Mammary epithelial cell (primary cell): ENCODE measurements at regions of chr1 and their contacts with region 1.

Region 1: DNA sequence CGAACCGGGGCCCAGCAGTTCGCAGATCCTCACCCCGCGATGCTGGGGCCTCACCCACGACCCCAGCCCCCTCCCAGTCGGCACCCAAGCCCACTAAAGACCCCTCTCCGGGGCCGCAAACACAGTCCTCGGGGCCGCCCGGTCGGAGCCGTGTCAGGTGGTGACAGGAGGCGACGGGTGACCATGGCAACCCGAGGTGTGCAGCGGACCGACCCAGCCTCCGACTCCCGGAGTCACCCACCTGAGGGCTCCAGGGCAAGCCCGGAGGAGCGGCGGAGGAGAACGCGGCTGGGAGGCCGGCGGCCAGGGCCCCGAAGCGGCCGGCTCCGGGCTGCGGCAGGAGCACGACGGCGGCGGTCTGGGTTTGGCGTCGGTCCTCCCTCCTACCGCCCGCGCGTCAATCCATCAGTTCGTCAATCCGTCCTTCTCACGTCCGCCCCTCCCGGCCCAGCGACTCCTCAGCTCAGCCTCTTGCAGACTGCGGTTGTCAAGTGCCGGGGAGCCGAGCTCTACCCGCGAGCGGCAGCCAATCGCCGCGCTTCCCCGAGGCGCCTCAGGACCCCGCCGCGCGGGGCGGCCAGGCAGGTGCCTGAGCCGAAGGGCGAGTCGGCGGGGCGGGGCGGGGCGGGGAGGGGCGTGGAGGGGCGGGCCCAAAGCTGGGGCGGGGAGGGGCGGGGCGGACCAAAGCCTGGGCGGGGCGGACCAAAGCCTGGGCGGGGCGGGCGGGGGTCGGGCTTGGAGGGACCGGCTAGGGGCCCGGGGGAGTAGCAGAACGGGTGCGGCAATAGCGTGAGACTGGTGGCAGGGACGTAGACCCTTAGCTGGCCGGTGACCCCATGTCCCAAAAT is at the start of gene WDR47:
- DNase-seq: peak; percentile 96
- H3K4me3 ChIP-seq: peak within 1 kb of the TSS; percentile 91 to 99 (median 96)
- H3K27ac ChIP-seq: peak within 1 kb of the TSS; percentile 74
- H3K4me1 ChIP-seq: no peaks in the 10 kb centered on the region
- H3K27me3 ChIP-seq: no peaks in the 10 kb centered on the region
- CTCF ChIP-seq: no peak
- total RNA-seq, gene WDR47: 24.3 to 45.5 TPM

Region 2: DNA sequence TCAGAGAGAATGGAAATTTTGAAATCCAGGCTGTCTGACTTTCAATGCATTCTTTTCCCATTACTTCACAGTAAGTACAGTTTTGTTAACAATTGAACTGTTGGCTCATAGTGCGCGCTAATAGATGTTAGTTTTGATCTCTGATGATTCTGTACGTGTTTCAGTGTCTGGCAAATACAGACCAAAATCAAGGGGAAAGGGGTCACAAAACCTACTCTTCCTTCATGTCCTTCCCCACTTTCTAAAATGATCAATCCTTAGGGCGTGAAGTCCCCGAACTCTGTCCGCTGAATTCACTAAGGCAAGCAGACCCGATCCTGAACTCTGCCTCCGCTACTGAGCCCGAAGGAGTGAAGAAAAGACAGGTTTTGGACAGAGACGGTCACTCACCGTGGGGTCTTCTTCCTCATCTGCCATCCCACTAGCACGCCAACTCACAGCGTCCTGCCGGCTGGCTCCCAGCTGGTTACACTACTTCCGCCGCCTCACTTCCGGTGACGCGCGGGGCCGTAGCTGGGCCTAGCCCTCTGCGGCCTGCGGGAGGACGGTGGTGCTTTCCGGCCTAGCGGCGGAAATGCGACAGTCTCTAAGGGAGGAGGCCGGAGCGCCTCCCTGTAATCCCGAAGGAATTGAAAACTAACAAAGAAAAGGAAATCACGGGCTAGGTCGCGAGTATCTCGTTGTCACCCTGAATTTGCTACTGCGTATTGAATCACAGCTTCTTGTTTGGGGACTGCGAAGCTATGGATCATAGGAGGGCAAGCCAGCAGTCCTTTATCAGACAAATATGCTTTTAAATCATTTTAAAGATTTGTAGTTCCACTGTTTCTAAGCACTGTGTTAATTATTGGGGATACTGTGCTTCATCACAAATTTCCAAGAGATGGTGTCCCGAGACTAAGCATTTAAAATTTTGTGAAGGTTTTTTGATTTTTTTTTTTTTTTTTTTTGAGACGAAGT is 34.0 kb after region 1 on chr1 and contains the start of gene TAF13:
- CTCF ChIA-PET with region 1: no interaction called
- dilution Hi-C with region 1: no loop called
- in situ Hi-C with region 1: no loop called
- intact Hi-C with region 1: loop called (anchors 5 kb)
- DNase-seq: peak; percentile 93
- H3K4me3 ChIP-seq: peak within 1 kb of the TSS; percentile 88 to 94 (median 92)
- H3K27ac ChIP-seq: peak within 1 kb of the TSS; percentile 90
- H3K4me1 ChIP-seq: peaks cover 8% of the 10 kb centered on the region
- H3K27me3 ChIP-seq: no peaks in the 10 kb centered on the region
- CTCF ChIP-seq: peak in 1 of 2 donors; percentile 34
- total RNA-seq, gene TAF13: 67.8 to 80.4 TPM

Region 3: GRCh38 chr1:109099938-109100773 is 58.3 kb after region 1 on chr1:
- CTCF ChIA-PET with region 1: interaction called, 3 read pairs
- dilution Hi-C with region 1: no loop called
- in situ Hi-C with region 1: no loop called
- intact Hi-C with region 1: loop called (anchors 1 kb)
- DNase-seq: peak; percentile 94
- H3K4me3 ChIP-seq: peak overlapping the region; percentile 76 to 90 (median 84)
- H3K27ac ChIP-seq: peak overlapping the region; percentile 80
- H3K4me1 ChIP-seq: peaks cover 8% of the 10 kb centered on the region
- H3K27me3 ChIP-seq: no peaks in the 10 kb centered on the region
- CTCF ChIP-seq: peak; percentile 83 to 93